HepG2 (cell line): ENCODE measurements at regions of chr1 and their contacts with region 1.

Region 1: GRCh38 chr1:206030714-206031113 is 7.0 kb upstream of the CTSE start:
- DNase-seq: peak; percentile 87
- ATAC-seq: peak; percentile 99
- H3K4me3 ChIP-seq: no peak overlapping the region
- H3K27ac ChIP-seq: no peak overlapping the region
- H3K4me1 ChIP-seq: peaks cover 19% of the 10 kb centered on the region
- H3K27me3 ChIP-seq: peaks cover 0 to 22% of the 10 kb centered on the region in 2 experiments; a peak in 2 of 5 replicates
- CTCF ChIP-seq: peak; percentile 96
- EP300 ChIP-seq: no peak
- POLR2A ChIP-seq: no peak
- RAD21 ChIP-seq: peak; percentile 89

Region 2: DNA sequence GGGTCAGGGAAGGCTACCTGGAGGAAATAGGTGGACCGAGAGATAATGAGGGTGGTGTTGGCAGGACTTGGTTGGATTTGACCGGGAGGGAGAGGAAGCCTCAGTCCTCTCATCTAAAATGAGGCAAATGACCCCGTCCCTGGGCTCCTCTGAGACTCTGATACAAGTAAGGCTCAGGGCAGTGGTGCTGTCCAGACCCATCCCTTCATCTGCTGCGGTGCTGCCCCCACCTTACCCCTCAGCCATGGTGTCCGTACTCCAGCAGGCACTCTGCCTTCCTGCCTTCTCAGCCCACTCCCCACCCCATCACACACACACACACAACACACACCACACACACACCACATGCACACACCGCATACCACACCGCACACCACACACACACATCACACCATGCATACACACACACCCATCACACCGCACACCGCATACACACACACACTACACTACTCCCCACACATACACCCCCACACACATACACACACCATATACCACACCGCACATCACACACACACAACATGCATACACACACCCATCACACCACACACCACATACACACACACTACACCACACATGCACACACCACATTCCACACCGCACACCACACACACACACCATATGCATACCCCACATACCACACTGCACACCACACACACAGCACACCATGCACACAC is 58.1 kb before region 1 on chr1:
- CTCF ChIA-PET with region 1: no interaction called
- POLR2A ChIA-PET with region 1: no interaction called
- in situ Hi-C with region 1: no loop called
- intact Hi-C with region 1: no loop called
- DNase-seq: no peak
- ATAC-seq: peak; percentile 47
- H3K4me3 ChIP-seq: no peak overlapping the region
- H3K27ac ChIP-seq: no peak overlapping the region
- H3K4me1 ChIP-seq: peaks cover 13% of the 10 kb centered on the region
- H3K27me3 ChIP-seq: peaks cover 1 to 7% of the 10 kb centered on the region in 2 experiments; a peak in 2 of 5 replicates
- CTCF ChIP-seq: no peak
- EP300 ChIP-seq: no peak
- POLR2A ChIP-seq: no peak
- RAD21 ChIP-seq: no peak

Region 3: DNA sequence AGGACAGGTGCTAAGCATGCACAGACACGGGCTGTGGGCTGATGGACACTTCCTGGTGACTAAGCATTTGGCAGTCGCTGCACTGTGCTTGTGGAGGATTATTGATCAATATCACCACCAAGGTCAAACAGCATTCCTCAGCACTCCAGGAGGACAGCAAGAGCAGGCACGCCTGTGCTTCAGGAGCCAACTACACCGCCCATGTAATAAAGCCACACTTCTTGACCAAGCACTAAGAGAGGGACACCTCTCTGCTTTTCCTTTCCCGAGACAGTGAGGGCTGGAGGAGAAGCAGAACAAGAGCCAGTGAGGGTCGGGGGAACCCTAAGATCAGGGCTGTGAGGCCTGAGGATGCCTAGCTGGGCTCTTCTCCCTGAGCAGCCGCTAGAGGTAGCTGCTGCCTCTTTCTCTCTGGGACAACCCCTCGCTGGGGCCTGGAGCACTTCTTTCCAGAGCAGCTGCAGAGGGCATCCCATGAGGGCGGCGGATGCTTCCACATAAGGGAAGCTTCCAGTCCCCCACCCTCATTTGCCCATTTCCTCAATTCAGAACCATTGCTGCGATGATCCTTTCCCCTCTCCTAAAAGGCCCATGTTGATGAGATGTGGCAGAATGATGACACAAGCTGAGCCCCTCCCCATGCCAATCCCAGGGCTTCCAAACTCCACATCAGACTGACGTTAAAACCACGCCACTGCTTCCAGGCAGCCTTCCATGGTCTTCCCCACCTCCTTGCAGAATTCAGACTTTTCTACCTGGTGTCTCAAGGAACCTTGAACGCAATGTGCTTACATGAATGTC is 46.6 kb before region 1 on chr1:
- CTCF ChIA-PET with region 1: no interaction called
- POLR2A ChIA-PET with region 1: no interaction called
- in situ Hi-C with region 1: no loop called
- intact Hi-C with region 1: loop called (anchors 1 kb)
- DNase-seq: peak; percentile 80
- ATAC-seq: peak; percentile 95
- H3K4me3 ChIP-seq: peak overlapping the region in 1 of 3 experiments; percentile 38; a peak in 2 of 6 replicates
- H3K27ac ChIP-seq: no peak overlapping the region
- H3K4me1 ChIP-seq: peaks cover 17% of the 10 kb centered on the region
- H3K27me3 ChIP-seq: peaks cover 0 to 12% of the 10 kb centered on the region in 2 experiments; a peak in 3 of 5 replicates
- CTCF ChIP-seq: peak; percentile 92
- EP300 ChIP-seq: 0 out of 4 replicates have a peak, but pooled peaks of 1 of the 2 experiments have one; percentile 8
- POLR2A ChIP-seq: no peak
- RAD21 ChIP-seq: peak; percentile 80

Region 4: GRCh38 chr1:206050655-206051235 is 20.0 kb after region 1 on chr1:
- CTCF ChIA-PET with region 1: no interaction called
- POLR2A ChIA-PET with region 1: interaction called, 5 read pairs
- in situ Hi-C with region 1: no loop called
- intact Hi-C with region 1: loop called (anchors 1 kb)
- DNase-seq: no peak
- ATAC-seq: no peak
- H3K4me3 ChIP-seq: no peak overlapping the region
- H3K27ac ChIP-seq: no peak overlapping the region
- H3K4me1 ChIP-seq: peaks cover 65% of the 10 kb centered on the region
- H3K27me3 ChIP-seq: no peaks in the 10 kb centered on the region
- CTCF ChIP-seq: no peak
- EP300 ChIP-seq: no peak
- POLR2A ChIP-seq: no peak
- RAD21 ChIP-seq: no peak

Region 5: GRCh38 chr1:206411321-206411720 is 380.6 kb after region 1 on chr1:
- CTCF ChIA-PET with region 1: no interaction called
- POLR2A ChIA-PET with region 1: no interaction called
- in situ Hi-C with region 1: no loop called
- intact Hi-C with region 1: no loop called
- DNase-seq: no peak
- ATAC-seq: no peak
- H3K4me3 ChIP-seq: no peak overlapping the region
- H3K27ac ChIP-seq: no peak overlapping the region
- H3K4me1 ChIP-seq: no peaks in the 10 kb centered on the region
- H3K27me3 ChIP-seq: no peaks in the 10 kb centered on the region
- CTCF ChIP-seq: no peak
- EP300 ChIP-seq: no peak
- POLR2A ChIP-seq: no peak
- RAD21 ChIP-seq: no peak